BJ (cell line): ENCODE measurements at regions of chr16 and their contacts with region 1.

Region 1: DNA sequence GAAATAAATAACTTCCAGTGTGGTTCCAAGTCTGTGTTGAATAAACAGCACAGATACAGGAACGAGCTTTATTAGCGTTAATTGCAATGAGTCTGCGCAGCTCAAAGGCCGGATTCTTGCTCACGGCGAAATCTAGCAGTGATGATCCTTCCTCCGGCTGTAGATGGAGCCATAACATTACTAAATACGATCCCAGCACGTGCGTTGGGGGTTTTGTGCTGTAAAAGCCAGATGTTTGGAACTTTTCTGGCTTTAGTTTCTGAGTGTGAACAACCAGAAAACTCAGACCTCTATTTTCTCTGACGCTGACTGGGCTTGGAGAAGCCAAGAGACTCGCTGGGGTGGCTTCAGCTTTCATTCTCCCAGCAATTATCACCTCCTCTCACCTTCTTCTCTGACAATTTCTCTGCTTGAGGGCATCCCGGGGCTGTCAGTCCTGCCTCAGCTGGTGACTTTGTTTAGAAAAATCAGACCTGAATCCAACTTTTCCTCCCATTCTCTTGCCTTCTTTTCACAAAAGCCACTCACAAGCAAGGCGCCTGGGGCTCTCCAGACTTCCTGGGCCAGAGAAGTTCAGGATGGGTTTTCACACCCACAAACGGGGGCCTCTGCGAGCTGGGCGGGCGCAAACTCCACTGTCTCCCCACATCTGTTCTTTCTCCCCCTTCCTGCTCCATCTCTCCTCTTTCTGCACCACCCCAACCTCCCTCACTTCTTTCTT is 47.1 kb upstream of the AKTIP start:
- DNase-seq: peak; percentile 49
- H3K4me3 ChIP-seq: no peak overlapping the region
- H3K27me3 ChIP-seq: peaks cover 18% of the 10 kb centered on the region
- CTCF ChIP-seq: peak; percentile 78

Region 2: DNA sequence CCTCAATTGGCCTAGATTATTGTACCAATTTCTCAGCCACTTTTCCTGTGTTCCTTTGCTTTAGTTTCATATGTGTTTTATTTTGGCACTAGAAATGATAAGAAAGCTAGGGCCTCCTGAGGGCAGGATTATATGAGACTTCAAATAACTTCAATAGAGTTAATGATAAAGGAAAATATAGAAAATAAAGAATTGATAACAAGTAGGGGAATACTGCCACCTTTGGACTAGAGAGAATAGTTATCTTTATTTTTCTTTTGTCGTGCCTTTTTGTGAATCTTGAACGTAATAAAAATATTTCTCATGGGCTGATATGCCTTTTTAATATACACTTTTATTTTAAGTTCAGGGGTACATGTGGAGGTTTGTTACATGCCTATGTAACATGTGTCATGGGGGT is 145.2 kb before region 1 on chr16:
- CTCF ChIA-PET with region 1: no interaction called
- POLR2A ChIA-PET with region 1: no interaction called
- DNase-seq: no peak
- H3K4me3 ChIP-seq: no peak overlapping the region
- H3K27me3 ChIP-seq: no peaks in the 10 kb centered on the region
- CTCF ChIP-seq: no peak

Region 3: DNA sequence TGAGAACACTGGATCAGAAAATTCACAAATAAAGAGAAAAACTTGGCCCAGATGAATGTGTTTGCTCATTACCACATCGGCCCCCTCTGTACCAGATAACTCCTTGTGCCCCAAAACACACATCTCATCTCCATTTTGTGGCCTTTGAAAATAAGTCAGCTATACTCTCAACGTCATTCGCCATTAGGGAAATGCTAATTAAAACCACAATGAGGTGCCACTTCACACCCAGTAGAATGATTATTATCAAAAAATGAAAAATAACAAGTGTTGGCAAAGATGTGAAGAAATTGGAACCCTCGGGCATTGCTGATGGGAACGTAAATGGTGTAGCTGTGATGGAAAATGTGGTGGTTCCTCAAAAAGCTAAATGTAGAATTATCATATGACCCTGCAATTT is 12.5 kb before region 1 on chr16:
- CTCF ChIA-PET with region 1: interaction called, 10 read pairs
- POLR2A ChIA-PET with region 1: no interaction called
- DNase-seq: no peak
- H3K4me3 ChIP-seq: no peak overlapping the region
- H3K27me3 ChIP-seq: no peaks in the 10 kb centered on the region; the same call in 1 of the 2 replicates
- CTCF ChIP-seq: no peak